HEK293 (cell line): ENCODE measurements at regions of chr10 and their contacts with region 1.

Region 1: DNA sequence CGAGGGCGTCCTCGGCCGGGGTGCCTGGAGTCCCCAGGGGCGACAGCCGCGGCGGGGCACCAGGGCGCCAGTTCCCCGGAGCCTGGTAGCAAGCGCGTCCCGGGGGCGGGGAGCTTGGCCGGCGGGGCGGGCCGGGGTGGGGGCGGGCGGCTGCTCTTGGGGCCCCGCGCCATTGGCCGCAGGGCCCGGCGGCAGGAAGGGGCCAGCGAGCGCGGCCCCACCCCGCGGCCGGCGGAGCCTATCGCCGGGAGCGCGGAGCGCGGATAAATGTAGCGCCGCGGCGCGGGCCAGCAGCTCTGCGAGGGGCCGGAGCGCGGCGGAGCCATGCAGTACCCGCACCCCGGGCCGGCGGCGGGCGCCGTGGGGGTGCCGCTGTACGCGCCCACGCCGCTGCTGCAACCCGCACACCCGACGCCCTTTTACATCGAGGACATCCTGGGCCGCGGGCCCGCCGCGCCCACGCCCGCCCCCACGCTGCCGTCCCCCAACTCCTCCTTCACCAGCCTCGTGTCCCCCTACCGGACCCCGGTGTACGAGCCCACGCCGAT is at the start of gene HHEX:
- H3K4me3 ChIP-seq: peak within 1 kb of the TSS; percentile 61
- H3K27ac ChIP-seq: peak within 1 kb of the TSS; percentile 78
- H3K4me1 ChIP-seq: peaks cover 6% of the 10 kb centered on the region
- CTCF ChIP-seq: no peak; the same call in 1 of the 2 replicates

Region 2: DNA sequence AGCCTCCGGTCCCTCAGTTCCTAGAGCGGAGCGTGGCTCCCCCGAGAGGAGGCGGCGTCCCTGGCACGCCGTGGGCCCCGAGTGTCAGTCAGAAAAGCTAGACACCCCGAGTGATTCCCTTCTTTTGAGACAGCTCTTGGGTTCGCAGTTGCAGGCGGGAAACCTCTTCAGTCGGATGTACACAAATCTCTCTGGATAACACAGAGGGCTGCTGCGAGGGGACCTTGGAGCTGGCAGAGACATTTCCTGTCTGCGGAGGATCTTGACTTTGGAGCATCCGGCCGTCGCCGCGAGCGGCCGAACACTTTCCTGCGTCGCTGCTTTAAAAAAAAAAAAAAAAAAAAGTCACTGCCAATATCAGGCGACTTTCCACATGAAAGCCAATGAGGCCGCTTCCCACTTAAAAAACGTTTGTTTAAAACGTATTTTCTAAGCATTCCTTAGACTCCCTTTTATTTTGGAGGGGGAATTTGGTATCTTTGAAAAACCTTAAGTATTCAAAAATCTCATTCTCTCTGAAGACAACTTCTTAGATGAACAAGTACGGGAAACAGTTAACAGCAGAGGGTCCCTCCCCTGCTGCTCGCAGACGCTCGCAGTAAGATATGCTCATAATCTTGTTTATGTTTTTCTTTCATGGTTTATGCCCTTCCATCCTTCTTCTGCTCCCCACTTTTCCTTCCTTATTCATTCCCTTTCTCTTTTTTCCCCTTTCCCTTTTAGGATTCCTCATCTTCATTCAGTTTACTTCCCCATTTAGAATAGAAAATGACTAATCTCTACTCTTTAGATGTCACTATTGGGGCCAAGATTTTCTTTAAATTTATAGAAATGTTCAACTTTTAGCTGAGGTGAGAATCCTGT is 10.0 kb after region 1 on chr10:
- CTCF ChIA-PET with region 1: no interaction called
- POLR2A ChIA-PET with region 1: interaction called, 17 read pairs
- H3K4me3 ChIP-seq: peak overlapping the region; percentile 23
- H3K27ac ChIP-seq: peak overlapping the region; percentile 20; the same call in 1 of the 2 replicates
- H3K4me1 ChIP-seq: no peaks in the 10 kb centered on the region
- CTCF ChIP-seq: no peak

Region 3: GRCh38 chr10:92773776-92774175 is 84.0 kb after region 1 on chr10:
- CTCF ChIA-PET with region 1: no interaction called
- POLR2A ChIA-PET with region 1: no interaction called
- H3K4me3 ChIP-seq: no peak overlapping the region
- H3K27ac ChIP-seq: no peak overlapping the region
- H3K4me1 ChIP-seq: no peaks in the 10 kb centered on the region
- CTCF ChIP-seq: no peak

Region 4: DNA sequence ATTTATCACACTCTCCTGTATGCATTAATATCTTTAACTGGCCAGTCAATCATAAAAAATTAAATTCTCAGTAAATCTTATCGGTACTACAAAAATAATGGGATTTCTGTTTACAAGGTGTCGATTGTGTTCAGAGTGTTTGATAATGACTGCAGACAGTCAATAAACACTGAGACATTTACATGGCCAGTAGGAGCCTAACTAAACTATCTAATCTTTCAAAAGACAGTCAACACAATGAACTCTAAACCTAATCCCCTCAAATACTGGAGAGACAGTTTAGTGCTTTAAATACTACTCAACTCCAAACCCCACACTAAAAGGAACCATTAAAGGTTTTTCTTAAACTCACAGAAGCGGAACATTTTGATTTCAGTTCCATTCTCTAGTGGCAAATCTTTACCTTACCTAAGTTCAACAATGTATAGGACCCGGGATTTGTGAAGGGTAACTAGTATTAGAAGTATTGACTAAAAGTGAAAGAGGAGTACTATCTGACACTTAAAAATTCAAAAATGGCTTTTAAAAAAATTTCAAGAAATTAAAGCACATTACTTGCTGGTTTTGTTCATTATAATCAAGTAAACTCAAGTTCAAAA is 121.3 kb after region 1 on chr10:
- CTCF ChIA-PET with region 1: no interaction called
- POLR2A ChIA-PET with region 1: no interaction called
- H3K4me3 ChIP-seq: no peak overlapping the region
- H3K27ac ChIP-seq: no peak overlapping the region
- H3K4me1 ChIP-seq: peaks cover 8% of the 10 kb centered on the region; the same call in 1 of the 2 replicates
- CTCF ChIP-seq: no peak